CD4-positive, alpha-beta memory T cell (primary cell): ENCODE measurements at regions of chr18 and their contacts with region 1.

Region 1: DNA sequence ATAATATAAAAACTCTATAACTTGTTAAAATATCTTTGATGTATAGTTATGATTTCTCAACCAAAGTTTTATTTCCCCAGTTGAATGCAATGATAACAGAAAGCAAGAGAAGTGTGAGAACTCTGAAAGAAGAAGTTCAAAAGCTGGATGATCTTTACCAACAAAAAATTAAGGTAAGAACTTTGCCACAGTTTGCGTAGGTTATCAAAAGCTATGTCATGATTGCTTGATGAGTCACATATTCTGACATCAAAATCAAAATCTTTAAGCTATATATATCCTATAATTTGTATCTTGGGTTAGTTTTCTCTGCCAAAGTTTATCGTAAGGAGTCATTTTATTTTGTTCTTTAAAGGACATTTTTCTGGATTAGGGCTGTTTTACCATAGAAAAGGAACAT is 35.0 kb downstream of the NDC80 start:
- DNase-seq: peak in 4 of 5 donors; percentile 41 to 54 (median 46)
- H3K4me3 ChIP-seq: peak overlapping the region in 1 of 2 donors; percentile 8
- H3K4me3 Mint-ChIP-seq: peak overlapping the region; percentile 52 to 89 (median 66)
- H3K27ac ChIP-seq: peak overlapping the region; percentile 55
- H3K27ac Mint-ChIP-seq: peak overlapping the region; percentile 76 to 97 (median 93)
- H3K4me1 ChIP-seq: peaks cover 59% of the 10 kb centered on the region
- H3K4me1 Mint-ChIP-seq: peaks cover 35 to 52% (median 44%) of the 10 kb centered on the region in 4 donors
- H3K27me3 ChIP-seq: no peaks in the 10 kb centered on the region
- H3K27me3 Mint-ChIP-seq: no peaks in the 10 kb centered on the region

Region 2: GRCh38 chr18:2376707-2377106 is 229.6 kb before region 1 on chr18:
- CTCF ChIA-PET with region 1: no interaction called
- POLR2A ChIA-PET with region 1: no interaction called
- intact Hi-C with region 1: no loop called
- DNase-seq: no peak
- H3K4me3 ChIP-seq: no peak overlapping the region
- H3K4me3 Mint-ChIP-seq: no peak overlapping the region
- H3K27ac ChIP-seq: no peak overlapping the region
- H3K27ac Mint-ChIP-seq: no peak overlapping the region
- H3K4me1 ChIP-seq: no peaks in the 10 kb centered on the region
- H3K4me1 Mint-ChIP-seq: no peaks in the 10 kb centered on the region
- H3K27me3 ChIP-seq: no peaks in the 10 kb centered on the region
- H3K27me3 Mint-ChIP-seq: peaks cover 23 to 31% of the 10 kb centered on the region in 2 donors

Region 3: DNA sequence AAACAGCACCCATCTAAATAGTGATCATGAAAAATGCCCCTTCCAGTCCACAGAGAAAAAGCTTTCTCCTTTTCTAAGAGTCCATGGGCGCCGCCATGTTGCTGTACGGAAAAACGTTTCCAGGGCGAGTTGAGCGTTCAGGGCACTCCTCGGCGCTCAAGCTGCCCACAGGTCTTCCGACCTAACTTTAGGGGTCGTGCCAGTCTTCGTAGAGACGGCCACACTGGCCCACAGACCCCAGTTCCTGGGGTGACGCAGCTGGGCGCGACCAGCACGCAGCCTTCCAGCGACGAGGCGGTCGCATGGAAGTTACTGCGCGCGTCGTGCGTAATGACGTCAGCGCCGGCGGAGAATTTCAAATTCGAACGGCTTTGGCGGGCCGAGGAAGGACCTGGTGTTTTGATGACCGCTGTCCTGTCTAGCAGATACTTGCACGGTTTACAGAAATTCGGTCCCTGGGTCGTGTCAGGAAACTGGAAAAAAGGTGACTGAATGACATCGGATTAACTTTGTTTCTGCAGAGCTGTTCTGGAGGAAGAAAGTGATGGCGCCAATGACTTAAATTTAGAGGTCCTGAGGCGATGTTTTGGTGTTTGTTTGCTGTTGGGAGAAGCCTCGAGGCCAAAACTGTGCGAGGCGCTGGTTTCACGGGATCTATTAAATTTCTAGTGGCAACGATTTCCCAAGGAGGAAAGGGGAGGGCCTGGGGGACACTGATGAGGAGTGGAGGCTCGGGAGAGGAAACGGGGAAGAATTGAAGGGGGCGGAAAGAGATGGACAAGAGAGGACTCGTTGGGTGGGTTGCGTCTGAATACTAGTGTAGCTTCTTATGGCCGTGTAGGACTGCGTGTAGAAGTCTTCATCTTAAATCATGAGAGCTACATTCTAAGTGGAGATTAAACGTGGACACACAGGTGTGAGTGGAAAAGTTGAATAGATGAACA is 34.9 kb before region 1 on chr18 and contains the starts of genes METTL4 and NDC80:
- CTCF ChIA-PET with region 1: interaction called, 4 read pairs
- POLR2A ChIA-PET with region 1: interaction called, 62 read pairs
- intact Hi-C with region 1: loop called (anchors 1 kb)
- DNase-seq: peak; percentile 84 to 91 (median 85)
- H3K4me3 ChIP-seq: peak within 1 kb of the TSS; percentile 80 to 88
- H3K4me3 Mint-ChIP-seq: peak within 1 kb of the TSS; percentile 99 to 100 (median 100)
- H3K27ac ChIP-seq: peak within 1 kb of the TSS; percentile 99
- H3K27ac Mint-ChIP-seq: peak within 1 kb of the TSS; percentile 99 to 100 (median 100)
- H3K4me1 ChIP-seq: peaks cover 44% of the 10 kb centered on the region
- H3K4me1 Mint-ChIP-seq: peaks cover 42 to 74% (median 56%) of the 10 kb centered on the region in 4 donors
- H3K27me3 ChIP-seq: no peaks in the 10 kb centered on the region
- H3K27me3 Mint-ChIP-seq: no peaks in the 10 kb centered on the region
- total RNA-seq, gene METTL4: 25.8 to 29.3 TPM
- total RNA-seq, gene NDC80: 3.8 to 6.2 TPM

Region 4: DNA sequence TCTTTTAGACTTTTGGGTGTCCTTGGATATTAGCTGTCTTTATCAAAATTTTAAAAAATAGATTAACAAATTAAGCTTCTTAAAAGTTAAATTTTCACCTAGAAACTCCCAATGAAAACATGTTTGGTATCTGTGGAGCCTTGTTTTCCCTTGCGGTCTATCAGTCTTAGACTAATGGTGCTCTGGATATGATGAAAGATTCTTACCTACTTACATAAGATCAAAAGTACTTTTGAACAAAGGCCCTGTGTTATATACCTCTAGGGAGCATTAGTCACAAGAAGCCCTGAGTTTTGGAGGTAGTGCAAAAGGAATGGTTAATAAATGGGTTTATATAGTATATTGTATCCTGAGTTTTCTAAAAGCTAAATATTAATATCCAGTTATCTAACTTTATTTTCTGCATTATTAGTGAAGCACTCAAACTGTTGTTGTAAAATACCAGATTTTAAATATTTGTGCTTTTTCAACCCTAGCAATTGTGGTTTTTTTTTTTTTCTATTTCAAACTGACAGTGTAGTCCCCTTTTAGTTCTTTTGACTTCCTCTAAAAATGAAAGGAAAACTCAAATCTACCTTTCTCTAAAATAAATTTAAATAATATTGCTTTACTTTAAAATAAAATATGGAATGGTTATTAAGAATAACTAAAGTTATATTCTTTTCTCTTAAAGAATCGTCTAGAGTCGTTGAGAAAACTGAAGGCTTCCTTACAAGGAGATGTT is 16.8 kb before region 1 on chr18:
- CTCF ChIA-PET with region 1: interaction called, 19 read pairs
- POLR2A ChIA-PET with region 1: interaction called, 48 read pairs
- intact Hi-C with region 1: loop called (anchors 1 kb)
- DNase-seq: peak in 4 of 5 donors; percentile 15 to 37 (median 22)
- H3K4me3 ChIP-seq: peak overlapping the region in 1 of 2 donors; percentile 38
- H3K4me3 Mint-ChIP-seq: peak overlapping the region in 7 of 8 donors; percentile 63 to 88 (median 76)
- H3K27ac ChIP-seq: peak overlapping the region; percentile 52
- H3K27ac Mint-ChIP-seq: peak overlapping the region; percentile 65 to 95 (median 93)
- H3K4me1 ChIP-seq: peaks cover 48% of the 10 kb centered on the region
- H3K4me1 Mint-ChIP-seq: peaks cover 22 to 57% (median 37%) of the 10 kb centered on the region in 4 donors
- H3K27me3 ChIP-seq: no peaks in the 10 kb centered on the region
- H3K27me3 Mint-ChIP-seq: no peaks in the 10 kb centered on the region

Region 5: DNA sequence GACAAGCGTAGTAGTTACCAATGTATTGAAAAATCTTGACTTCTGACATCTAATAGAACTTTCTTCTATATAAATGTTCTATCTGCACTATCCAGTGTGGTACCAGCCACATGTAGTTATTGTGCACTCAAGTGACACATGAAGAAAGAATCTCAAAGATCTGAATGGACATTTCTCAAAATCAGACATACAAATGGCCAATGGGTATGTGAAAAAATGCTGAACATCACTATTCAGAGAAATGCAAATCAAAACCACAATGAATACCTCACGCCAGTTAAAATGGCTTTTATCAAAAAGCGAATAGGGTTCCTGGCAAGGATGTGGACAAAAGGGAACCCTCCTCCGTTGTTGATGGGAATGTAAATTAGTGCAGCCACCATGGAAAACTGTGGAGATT is 11.7 kb after region 1 on chr18:
- CTCF ChIA-PET with region 1: no interaction called
- POLR2A ChIA-PET with region 1: interaction called, 10 read pairs
- intact Hi-C with region 1: no loop called
- DNase-seq: no peak
- H3K4me3 ChIP-seq: no peak overlapping the region
- H3K4me3 Mint-ChIP-seq: no peak overlapping the region
- H3K27ac ChIP-seq: no peak overlapping the region
- H3K27ac Mint-ChIP-seq: no peak overlapping the region
- H3K4me1 ChIP-seq: no peaks in the 10 kb centered on the region
- H3K4me1 Mint-ChIP-seq: peaks cover 0 to 4% (median under 1%) of the 10 kb centered on the region in 4 donors
- H3K27me3 ChIP-seq: no peaks in the 10 kb centered on the region
- H3K27me3 Mint-ChIP-seq: no peaks in the 10 kb centered on the region

Region 6: GRCh38 chr18:2641638-2642037 is 35.3 kb after region 1 on chr18:
- CTCF ChIA-PET with region 1: interaction called, 25 read pairs
- POLR2A ChIA-PET with region 1: interaction called, 282 read pairs
- intact Hi-C with region 1: loop called (anchors 1 kb)
- DNase-seq: peak in 4 of 5 donors; percentile 52 to 67 (median 59)
- H3K4me3 ChIP-seq: peak overlapping the region in 1 of 2 donors; percentile 8
- H3K4me3 Mint-ChIP-seq: peak overlapping the region; percentile 73 to 89 (median 84)
- H3K27ac ChIP-seq: peak overlapping the region; percentile 73
- H3K27ac Mint-ChIP-seq: peak overlapping the region in 3 of 7 donors; percentile 96 to 97 (median 96)
- H3K4me1 ChIP-seq: peaks cover 86% of the 10 kb centered on the region
- H3K4me1 Mint-ChIP-seq: peaks cover 32 to 55% (median 45%) of the 10 kb centered on the region in 4 donors
- H3K27me3 ChIP-seq: no peaks in the 10 kb centered on the region
- H3K27me3 Mint-ChIP-seq: peaks cover 0 to 2% of the 10 kb centered on the region in 2 donors

Region 7: GRCh38 chr18:2774669-2775068 is 168.3 kb after region 1 on chr18:
- CTCF ChIA-PET with region 1: no interaction called
- POLR2A ChIA-PET with region 1: no interaction called
- intact Hi-C with region 1: no loop called
- DNase-seq: no peak
- H3K4me3 ChIP-seq: no peak overlapping the region
- H3K4me3 Mint-ChIP-seq: no peak overlapping the region
- H3K27ac ChIP-seq: no peak overlapping the region
- H3K27ac Mint-ChIP-seq: peak overlapping the region in 2 of 7 donors; percentile 42 to 68
- H3K4me1 ChIP-seq: no peaks in the 10 kb centered on the region
- H3K4me1 Mint-ChIP-seq: peaks cover 0 to 6% (median 4%) of the 10 kb centered on the region in 4 donors
- H3K27me3 ChIP-seq: no peaks in the 10 kb centered on the region
- H3K27me3 Mint-ChIP-seq: no peaks in the 10 kb centered on the region